ENCODE measurements at regions of chr2 and their contacts with region 1.

Region 1: GRCh38 chr2:131673392-131674173 is 145.9 kb downstream of the CCDC74A start:
- DNase-seq: peak; percentile 20 to 71 (median 51)
- H3K4me3 ChIP-seq: peak overlapping the region; percentile 34
- H3K4me3 Mint-ChIP-seq: peak overlapping the region; percentile 45 to 85 (median 71)
- H3K27ac ChIP-seq: no peak overlapping the region
- H3K27ac Mint-ChIP-seq: peak overlapping the region in 2 of 8 donors; percentile 14 to 58
- H3K4me1 ChIP-seq: peaks cover 14% of the 10 kb centered on the region
- H3K4me1 Mint-ChIP-seq: peaks cover 4 to 16% (median 6%) of the 10 kb centered on the region in 3 donors
- H3K27me3 ChIP-seq: peaks cover 20% of the 10 kb centered on the region
- H3K27me3 Mint-ChIP-seq: peaks cover 31 to 41% of the 10 kb centered on the region in 2 donors

Region 2: GRCh38 chr2:131154071-131154531 is 519.5 kb before region 1 on chr2:
- CTCF ChIA-PET with region 1: interaction called, 18 read pairs
- POLR2A ChIA-PET with region 1: interaction called, 5 read pairs
- DNase-seq: peak; percentile 48 to 75 (median 50)
- H3K4me3 ChIP-seq: no peak overlapping the region
- H3K4me3 Mint-ChIP-seq: peak overlapping the region in 2 of 7 donors; percentile 29 to 38
- H3K27ac ChIP-seq: no peak overlapping the region
- H3K27ac Mint-ChIP-seq: peak overlapping the region in 5 of 8 donors; percentile 1 to 63 (median 31)
- H3K4me1 ChIP-seq: peaks cover 12% of the 10 kb centered on the region
- H3K4me1 Mint-ChIP-seq: peaks cover 15 to 27% (median 19%) of the 10 kb centered on the region in 3 donors
- H3K27me3 ChIP-seq: no peaks in the 10 kb centered on the region
- H3K27me3 Mint-ChIP-seq: no peaks in the 10 kb centered on the region

Region 3: DNA sequence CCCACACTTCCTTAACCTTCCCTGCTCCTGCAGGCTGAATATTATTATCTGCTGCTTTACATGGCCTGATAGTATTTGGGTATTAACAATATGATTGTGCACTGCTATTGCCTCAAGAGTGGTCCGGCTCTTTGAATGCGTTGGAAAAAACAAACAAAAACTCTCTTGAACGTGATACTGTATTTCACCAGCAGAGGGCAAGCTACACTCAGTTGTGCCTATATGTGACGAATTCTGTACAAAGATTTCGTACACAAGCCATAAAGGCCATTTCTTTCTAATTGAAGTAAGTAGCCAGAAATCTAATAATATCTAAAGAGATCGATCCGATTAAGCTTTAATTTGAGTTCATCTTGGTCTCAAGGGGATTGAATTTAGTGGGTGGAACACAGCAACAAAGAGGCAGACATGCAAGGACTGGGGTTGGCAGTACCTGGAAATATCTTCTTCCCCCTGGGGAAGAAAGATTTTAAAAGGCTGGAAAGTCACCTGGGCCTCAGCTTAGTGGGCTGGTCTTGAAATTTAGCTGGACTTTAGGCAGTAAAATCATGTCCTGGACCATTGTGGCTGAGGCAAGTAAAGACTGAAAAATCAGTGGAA is 260.3 kb before region 1 on chr2:
- CTCF ChIA-PET with region 1: interaction called, 32 read pairs
- POLR2A ChIA-PET with region 1: no interaction called
- DNase-seq: peak in 2 of 5 donors; percentile 21 to 43
- H3K4me3 ChIP-seq: no peak overlapping the region
- H3K4me3 Mint-ChIP-seq: no peak overlapping the region
- H3K27ac ChIP-seq: no peak overlapping the region
- H3K27ac Mint-ChIP-seq: peak overlapping the region in 1 of 8 donors; percentile 6
- H3K4me1 ChIP-seq: no peaks in the 10 kb centered on the region
- H3K4me1 Mint-ChIP-seq: peaks cover 0 to 5% (median 1%) of the 10 kb centered on the region in 3 donors
- H3K27me3 ChIP-seq: peaks cover 7% of the 10 kb centered on the region
- H3K27me3 Mint-ChIP-seq: peaks cover 13 to 58% of the 10 kb centered on the region in 2 donors

Region 4: GRCh38 chr2:131835621-131836091 is 162.1 kb after region 1 on chr2:
- CTCF ChIA-PET with region 1: no interaction called
- POLR2A ChIA-PET with region 1: no interaction called
- DNase-seq: no peak
- H3K4me3 ChIP-seq: no peak overlapping the region
- H3K4me3 Mint-ChIP-seq: no peak overlapping the region
- H3K27ac ChIP-seq: no peak overlapping the region
- H3K27ac Mint-ChIP-seq: no peak overlapping the region
- H3K4me1 ChIP-seq: no peaks in the 10 kb centered on the region
- H3K4me1 Mint-ChIP-seq: no peaks in the 10 kb centered on the region
- H3K27me3 ChIP-seq: no peaks in the 10 kb centered on the region
- H3K27me3 Mint-ChIP-seq: peaks cover 3 to 20% of the 10 kb centered on the region in 2 donors

Region 5: DNA sequence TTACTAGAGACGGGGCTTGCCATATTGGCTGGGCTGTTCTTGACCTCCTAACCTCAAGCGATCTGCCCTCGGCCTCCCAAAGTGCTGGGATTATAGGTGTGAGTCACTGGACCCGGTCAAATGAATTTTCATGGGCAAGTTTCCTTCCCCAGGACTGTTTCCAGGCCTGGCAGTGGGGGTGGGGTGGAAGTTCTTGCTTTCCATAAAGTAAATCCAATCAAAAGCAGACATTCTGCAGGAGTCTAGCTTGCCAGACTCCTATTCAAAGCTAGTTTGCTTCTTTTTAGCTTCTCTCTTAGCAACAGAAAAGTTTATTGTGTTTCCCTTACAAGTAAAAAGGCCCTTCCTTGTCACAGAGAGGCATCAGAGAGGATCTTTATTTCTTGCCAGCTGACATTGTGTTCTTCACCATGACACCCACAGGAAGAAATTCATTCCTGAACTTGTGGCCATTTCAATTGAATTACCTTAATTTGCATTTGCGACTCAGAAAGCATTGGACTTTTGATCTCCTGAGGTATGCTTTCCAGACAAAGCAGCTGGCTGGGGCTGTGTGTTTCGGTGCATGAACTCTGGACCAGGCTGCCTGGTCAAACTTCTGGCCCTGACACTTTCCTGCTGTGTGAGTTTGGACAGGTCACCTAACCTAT is 958.5 kb after region 1 on chr2:
- CTCF ChIA-PET with region 1: no interaction called
- POLR2A ChIA-PET with region 1: no interaction called
- DNase-seq: no peak
- H3K4me3 ChIP-seq: no peak overlapping the region
- H3K4me3 Mint-ChIP-seq: no peak overlapping the region
- H3K27ac ChIP-seq: no peak overlapping the region
- H3K27ac Mint-ChIP-seq: no peak overlapping the region
- H3K4me1 ChIP-seq: no peaks in the 10 kb centered on the region
- H3K4me1 Mint-ChIP-seq: no peaks in the 10 kb centered on the region
- H3K27me3 ChIP-seq: no peaks in the 10 kb centered on the region
- H3K27me3 Mint-ChIP-seq: peaks cover 0 to 1% of the 10 kb centered on the region in 2 donors

Measured in CD8-positive, alpha-beta memory T cell (primary cell).